Right cardiac atrium (tissue), 5 donors: ENCODE measurements at regions of chr1 and their contacts with region 1.

Region 1: GRCh38 chr1:6794164-6794563 is 8.9 kb downstream of the CAMTA1 start:
- DNase-seq: no peak
- ATAC-seq: no peak
- H3K4me3 ChIP-seq: no peak overlapping the region
- H3K27ac ChIP-seq: no peak overlapping the region
- H3K4me1 ChIP-seq: peaks cover 5% of the 10 kb centered on the region
- H3K27me3 ChIP-seq: no peaks in the 10 kb centered on the region

Region 2: DNA sequence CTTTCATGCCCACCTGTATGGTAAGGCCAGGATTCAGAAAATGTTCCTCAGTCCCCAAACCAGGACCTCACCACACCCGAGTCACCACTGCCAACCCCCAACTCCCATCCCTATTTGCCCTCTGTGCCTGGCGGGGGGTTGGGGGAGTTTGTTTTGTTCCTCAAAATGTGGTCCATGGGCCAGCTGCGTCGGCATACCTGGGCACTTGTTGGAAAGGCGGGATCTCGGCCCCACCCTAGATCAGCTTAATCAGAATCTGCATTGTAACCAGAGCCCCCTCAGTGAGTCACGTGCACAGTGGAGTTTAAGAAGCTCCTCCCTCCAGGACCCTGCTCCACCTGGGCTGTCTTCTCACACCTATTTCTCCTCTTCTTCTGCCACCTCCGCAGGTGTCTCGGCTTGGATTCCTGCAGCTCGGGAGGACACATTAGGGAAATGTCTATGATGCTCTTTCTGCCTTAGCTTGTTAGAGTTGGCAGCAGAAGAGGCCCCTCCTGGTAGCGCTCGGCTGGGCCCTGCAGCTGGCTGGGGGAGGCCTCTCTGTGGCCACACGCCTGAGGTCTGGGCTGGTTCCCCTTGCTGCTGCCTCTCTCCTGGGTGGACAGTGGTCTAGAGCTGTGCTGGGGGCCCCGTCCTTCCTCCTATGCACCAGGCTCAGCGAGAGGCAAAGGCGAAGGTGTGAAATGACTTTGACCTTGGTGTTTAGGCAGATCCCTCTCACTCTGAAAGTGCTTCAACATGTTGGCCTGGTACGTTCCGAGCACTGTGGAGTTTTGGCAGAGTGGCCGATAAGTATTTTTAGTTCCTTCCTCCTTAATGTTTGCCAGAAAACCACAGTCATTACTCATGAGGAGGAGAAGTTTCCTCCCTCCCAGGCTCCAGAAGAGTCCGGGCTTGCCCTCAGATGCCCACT is 50.7 kb before region 1 on chr1:
- intact Hi-C with region 1: no loop called
- DNase-seq: peak; percentile 47 to 75 (median 62)
- ATAC-seq: peak; percentile 91 to 95
- H3K4me3 ChIP-seq: no peak overlapping the region
- H3K27ac ChIP-seq: peak overlapping the region; percentile 82
- H3K4me1 ChIP-seq: peaks cover 4% of the 10 kb centered on the region
- H3K27me3 ChIP-seq: no peaks in the 10 kb centered on the region

Region 3: GRCh38 chr1:6889875-6890480 is 95.8 kb after region 1 on chr1:
- intact Hi-C with region 1: loop called in 3 of 4 experiments (anchors 5 to 10 kb)
- DNase-seq: peak; percentile 49 to 83 (median 68)
- ATAC-seq: peak; percentile 59 to 78
- H3K4me3 ChIP-seq: no peak overlapping the region
- H3K27ac ChIP-seq: no peak overlapping the region
- H3K4me1 ChIP-seq: no peaks in the 10 kb centered on the region
- H3K27me3 ChIP-seq: no peaks in the 10 kb centered on the region

Region 4: DNA sequence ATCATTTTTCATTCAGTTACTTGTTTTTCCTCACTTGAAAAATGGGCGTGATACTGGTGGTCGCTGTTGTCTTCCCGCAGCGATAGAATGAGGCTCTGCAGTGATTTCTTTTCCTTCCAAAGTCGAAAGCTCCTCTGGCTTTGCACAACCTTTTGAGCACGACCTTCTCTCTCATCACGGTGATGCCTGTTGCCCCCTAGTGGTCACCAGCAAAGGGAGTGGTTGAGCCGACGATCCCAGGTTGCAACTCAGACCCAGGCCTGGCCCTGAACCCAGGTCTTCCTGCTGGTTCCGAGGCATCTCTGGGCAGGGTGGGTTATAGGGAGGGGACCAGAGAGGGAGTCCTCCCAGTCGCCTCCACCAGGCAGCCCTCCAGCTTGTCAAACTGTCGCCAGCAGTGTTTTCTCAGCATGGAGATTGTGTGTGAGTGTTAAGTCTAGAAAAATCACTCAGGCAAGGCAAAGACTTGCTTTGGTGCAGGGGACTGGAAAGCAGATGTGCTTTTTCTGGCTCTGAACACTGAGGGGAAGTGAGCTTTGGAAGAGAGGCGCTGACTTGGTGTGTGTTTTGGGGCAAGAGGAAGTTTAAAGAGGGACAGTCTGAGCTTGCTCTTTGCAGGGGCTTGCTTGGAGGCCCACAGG is 276.3 kb after region 1 on chr1:
- intact Hi-C with region 1: loop called (anchors 2 to 10 kb)
- DNase-seq: peak; percentile 54 to 71 (median 66)
- ATAC-seq: peak; percentile 77 to 92
- H3K4me3 ChIP-seq: peak overlapping the region; percentile 8
- H3K27ac ChIP-seq: no peak overlapping the region
- H3K4me1 ChIP-seq: no peaks in the 10 kb centered on the region
- H3K27me3 ChIP-seq: no peaks in the 10 kb centered on the region

Region 5: GRCh38 chr1:7218210-7218832 is 424.2 kb after region 1 on chr1:
- intact Hi-C with region 1: loop called in 1 of 4 experiments (anchors 10 kb)
- DNase-seq: no peak
- ATAC-seq: no peak
- H3K4me3 ChIP-seq: no peak overlapping the region
- H3K27ac ChIP-seq: no peak overlapping the region
- H3K4me1 ChIP-seq: no peaks in the 10 kb centered on the region
- H3K27me3 ChIP-seq: no peaks in the 10 kb centered on the region